ENCODE measurements at regions of chr12 and their contacts with region 1.

Region 1: DNA sequence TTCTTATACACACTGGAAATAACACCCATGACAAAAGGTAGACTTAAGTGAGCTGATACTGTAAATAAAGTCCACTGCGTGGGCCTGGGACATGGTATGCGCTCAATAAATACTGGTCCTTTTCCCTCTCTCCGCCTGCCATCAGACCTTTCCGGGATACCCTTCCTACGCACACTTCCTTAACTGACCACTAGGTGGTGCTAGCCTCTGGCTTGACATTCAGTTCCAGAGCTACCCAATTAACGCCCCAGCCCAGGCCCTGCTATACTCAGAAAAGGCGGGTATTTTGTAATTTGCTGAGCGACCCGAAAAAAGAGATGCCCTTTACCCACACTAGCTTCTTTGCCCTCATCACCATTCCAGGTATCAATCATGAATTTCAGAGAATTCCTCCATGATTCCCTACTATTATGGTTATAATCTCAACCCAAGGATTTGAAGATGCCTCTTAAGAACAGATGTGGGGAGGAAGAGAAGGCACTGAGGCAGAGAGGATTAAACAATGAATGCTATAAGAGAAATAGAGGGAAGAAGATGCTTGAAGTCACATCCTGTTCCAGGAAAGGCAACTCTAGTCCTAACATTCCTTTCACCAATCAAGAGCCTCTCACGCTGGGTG is 3.9 kb upstream of the LRP1 start:
- DNase-seq: peak in 1 of 2 donors; percentile 60
- ATAC-seq: peak; percentile 45 to 52
- H3K4me3 ChIP-seq: no peak overlapping the region
- H3K27ac ChIP-seq: no peak overlapping the region
- H3K4me1 ChIP-seq: peaks cover 7 to 11% of the 10 kb centered on the region in 2 donors
- H3K27me3 ChIP-seq: no peaks in the 10 kb centered on the region
- CTCF ChIP-seq: peak; percentile 76 to 97 (median 92)
- POLR2A ChIP-seq: no peak

Region 2: DNA sequence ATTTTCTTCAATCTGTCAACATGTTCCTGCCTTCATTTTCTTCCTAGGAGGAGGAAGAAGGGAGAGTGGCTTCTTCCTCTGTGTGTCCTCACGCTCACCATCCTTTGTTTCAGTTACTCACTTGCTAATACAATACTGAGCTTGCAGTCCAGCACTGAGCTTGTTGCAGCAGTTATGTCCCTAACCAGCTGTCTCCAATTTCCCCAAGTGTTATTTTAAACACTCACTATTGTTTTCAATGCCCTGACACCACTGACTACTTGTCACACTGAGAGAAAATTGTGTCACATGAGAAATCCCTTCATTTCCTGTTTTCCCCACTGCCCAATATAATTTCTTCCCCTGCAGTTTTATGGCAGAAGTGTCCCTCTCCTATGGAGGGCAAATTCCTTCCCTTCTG is 307.9 kb before region 1 on chr12:
- in situ Hi-C with region 1: no loop called
- intact Hi-C with region 1: no loop called
- DNase-seq: no peak
- ATAC-seq: no peak
- H3K4me3 ChIP-seq: no peak overlapping the region
- H3K27ac ChIP-seq: no peak overlapping the region
- H3K4me1 ChIP-seq: no peaks in the 10 kb centered on the region
- H3K27me3 ChIP-seq: no peaks in the 10 kb centered on the region
- CTCF ChIP-seq: no peak
- POLR2A ChIP-seq: no peak

Region 3: GRCh38 chr12:57078519-57079404 is 45.6 kb before region 1 on chr12 and contains the start of gene NEMP1:
- in situ Hi-C with region 1: no loop called
- intact Hi-C with region 1: no loop called
- DNase-seq: peak; percentile 99
- ATAC-seq: peak; percentile 100
- H3K4me3 ChIP-seq: peak within 1 kb of the TSS; percentile 67 to 93 (median 76)
- H3K27ac ChIP-seq: peak within 1 kb of the TSS; percentile 76 to 90 (median 86)
- H3K4me1 ChIP-seq: peaks cover 11 to 12% of the 10 kb centered on the region in 2 donors
- H3K27me3 ChIP-seq: no peaks in the 10 kb centered on the region
- CTCF ChIP-seq: no peak
- POLR2A ChIP-seq: peak; percentile 20 to 70
- total RNA-seq, gene NEMP1: 1.2 to 6.7 (median 1.9) TPM

Region 4: DNA sequence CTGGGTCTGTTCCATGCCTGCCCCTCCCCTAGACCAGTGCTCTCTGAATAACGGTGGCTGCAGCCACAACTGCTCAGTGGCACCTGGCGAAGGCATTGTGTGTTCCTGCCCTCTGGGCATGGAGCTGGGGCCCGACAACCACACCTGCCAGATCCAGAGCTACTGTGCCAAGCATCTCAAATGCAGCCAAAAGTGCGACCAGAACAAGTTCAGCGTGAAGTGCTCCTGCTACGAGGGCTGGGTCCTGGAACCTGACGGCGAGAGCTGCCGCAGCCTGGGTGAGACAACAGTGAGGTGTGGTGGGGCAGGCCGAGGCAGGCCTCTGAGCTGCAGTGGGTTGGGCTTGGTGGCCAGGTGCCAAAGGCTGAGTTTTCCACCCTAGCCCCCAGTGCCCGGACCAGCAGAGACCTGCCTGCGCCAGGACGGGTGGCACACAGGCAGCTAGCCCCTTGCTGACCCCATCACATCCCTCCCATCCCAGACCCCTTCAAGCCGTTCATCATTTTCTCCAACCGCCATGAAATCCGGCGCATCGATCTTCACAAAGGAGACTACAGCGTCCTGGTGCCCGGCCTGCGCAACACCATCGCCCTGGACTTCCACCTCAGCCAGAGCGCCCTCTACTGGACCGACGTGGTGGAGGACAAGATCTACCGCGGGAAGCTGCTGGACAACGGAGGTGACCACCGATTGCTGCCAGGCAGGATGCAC is 51.2 kb after region 1 on chr12:
- in situ Hi-C with region 1: loop called (anchors 5 kb)
- intact Hi-C with region 1: loop called (anchors 1 kb)
- DNase-seq: peak; percentile 60 to 72
- ATAC-seq: peak; percentile 41 to 68
- H3K4me3 ChIP-seq: no peak overlapping the region
- H3K27ac ChIP-seq: no peak overlapping the region
- H3K4me1 ChIP-seq: no peaks in the 10 kb centered on the region
- H3K27me3 ChIP-seq: no peaks in the 10 kb centered on the region
- CTCF ChIP-seq: peak; percentile 34 to 74 (median 64)
- POLR2A ChIP-seq: no peak

Region 5: GRCh38 chr12:57182921-57183790 is 58.8 kb after region 1 on chr12:
- in situ Hi-C with region 1: loop called (anchors 5 kb)
- intact Hi-C with region 1: loop called (anchors 1 kb)
- DNase-seq: peak; percentile 35 to 62
- ATAC-seq: peak; percentile 77 to 93
- H3K4me3 ChIP-seq: no peak overlapping the region
- H3K27ac ChIP-seq: no peak overlapping the region
- H3K4me1 ChIP-seq: no peaks in the 10 kb centered on the region
- H3K27me3 ChIP-seq: no peaks in the 10 kb centered on the region
- CTCF ChIP-seq: peak; percentile 86 to 91 (median 89)
- POLR2A ChIP-seq: no peak

Measured in gastrocnemius medialis (tissue), 4 donors.